Dorsolateral prefrontal cortex (tissue), 120 donors: ENCODE measurements at regions of chr5 and their contacts with region 1.

Region 1: DNA sequence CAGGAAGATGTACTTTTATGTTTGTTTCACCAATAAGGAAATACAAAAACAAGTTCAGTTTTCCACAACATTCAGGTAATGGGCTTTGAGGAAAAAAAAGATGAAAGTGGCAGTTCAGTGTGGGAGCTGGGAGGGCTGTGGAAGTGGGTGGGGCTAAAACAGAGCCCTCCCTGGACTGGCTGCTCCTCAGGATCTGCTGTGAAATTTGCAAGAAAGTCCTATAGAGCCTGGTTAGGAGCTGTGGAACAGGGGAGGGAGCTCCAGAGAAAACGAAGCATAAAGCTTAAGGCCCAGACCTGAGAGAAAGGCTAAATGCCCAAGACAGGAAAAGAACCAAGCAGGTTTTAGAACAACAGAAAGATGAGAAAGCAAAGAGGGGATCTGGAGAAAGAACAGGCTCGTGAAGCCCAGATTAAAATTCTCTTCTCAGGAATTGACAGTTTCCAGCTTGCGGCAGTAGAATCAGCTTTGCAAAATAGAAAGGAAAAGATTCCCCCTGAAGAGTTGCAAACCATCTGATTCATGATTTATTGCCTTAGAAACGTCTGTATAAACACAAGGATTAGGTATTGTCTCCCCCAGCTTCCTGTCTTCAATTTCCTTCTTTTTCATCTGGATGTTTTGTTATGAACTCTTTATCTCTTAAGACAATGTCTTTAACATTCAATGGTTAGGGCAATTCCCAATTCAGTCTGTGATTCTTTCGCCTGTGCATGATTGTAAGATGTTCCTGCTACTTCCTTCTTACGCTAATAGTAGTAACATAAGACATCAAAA is 26.3 kb upstream of the CRHBP start:
- DNase-seq: no peak
- H3K4me3 ChIP-seq: no peak overlapping the region
- H3K27ac ChIP-seq: peak overlapping the region in 23 of 59 donors; percentile 3 to 84 (median 41)
- H3K27me3 ChIP-seq: peaks cover 0 to 3% (median 0%) of the 10 kb centered on the region in 45 donors
- CTCF ChIP-seq: no peak

Region 2: DNA sequence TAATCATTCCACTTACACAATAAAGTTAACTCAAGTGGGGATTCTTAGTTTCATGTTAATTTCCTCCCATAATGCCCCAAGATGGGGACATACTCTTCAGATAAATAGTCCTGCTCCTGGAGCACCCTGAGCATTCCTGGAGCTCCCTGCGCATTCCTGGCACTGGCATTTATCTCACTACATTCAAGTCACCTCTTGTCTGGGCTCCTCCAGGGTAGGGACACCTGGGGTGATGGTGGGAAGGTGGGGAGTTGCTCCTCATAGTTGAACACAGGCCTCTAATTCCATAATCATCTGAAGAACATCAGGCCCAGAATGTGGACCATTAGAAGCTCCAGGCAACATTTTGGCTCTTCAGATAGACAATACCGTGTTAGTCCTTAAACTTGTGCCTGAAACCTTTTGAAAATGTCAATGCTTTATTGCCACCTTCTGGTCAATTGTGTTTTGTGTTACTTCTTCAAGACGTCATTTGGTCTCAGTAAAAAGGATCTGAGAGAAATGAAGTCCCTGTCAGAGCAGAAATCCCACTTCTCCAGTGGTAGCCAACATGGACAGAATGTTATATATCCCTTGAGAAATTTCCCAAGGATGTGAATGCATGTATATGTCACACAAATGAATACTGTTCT is 89.5 kb after region 1 on chr5:
- intact Hi-C with region 1: loop called in 1 of 2 experiments (anchors 10 kb)
- DNase-seq: no peak
- H3K4me3 ChIP-seq: no peak overlapping the region
- H3K27ac ChIP-seq: no peak overlapping the region
- H3K27me3 ChIP-seq: peaks cover 0 to 3% (median 0%) of the 10 kb centered on the region in 45 donors
- CTCF ChIP-seq: peak in 54 of 56 donors; percentile 38 to 80 (median 59)

Region 3: GRCh38 chr5:77030097-77031071 is 103.9 kb after region 1 on chr5 and contains the start of gene AGGF1:
- intact Hi-C with region 1: no loop called
- DNase-seq: peak; percentile 77 to 96 (median 93)
- H3K4me3 ChIP-seq: peak within 1 kb of the TSS; percentile 62 to 100 (median 93)
- H3K27ac ChIP-seq: peak within 1 kb of the TSS; percentile 49 to 95 (median 87)
- H3K27me3 ChIP-seq: no peaks in the 10 kb centered on the region
- CTCF ChIP-seq: peak in 32 of 56 donors; percentile 5 to 56 (median 28)
- total RNA-seq, gene AGGF1: 23.6 to 41.9 (median 31.2) TPM